ENCODE measurements at regions of chr3 and their contacts with region 1.

Region 1: DNA sequence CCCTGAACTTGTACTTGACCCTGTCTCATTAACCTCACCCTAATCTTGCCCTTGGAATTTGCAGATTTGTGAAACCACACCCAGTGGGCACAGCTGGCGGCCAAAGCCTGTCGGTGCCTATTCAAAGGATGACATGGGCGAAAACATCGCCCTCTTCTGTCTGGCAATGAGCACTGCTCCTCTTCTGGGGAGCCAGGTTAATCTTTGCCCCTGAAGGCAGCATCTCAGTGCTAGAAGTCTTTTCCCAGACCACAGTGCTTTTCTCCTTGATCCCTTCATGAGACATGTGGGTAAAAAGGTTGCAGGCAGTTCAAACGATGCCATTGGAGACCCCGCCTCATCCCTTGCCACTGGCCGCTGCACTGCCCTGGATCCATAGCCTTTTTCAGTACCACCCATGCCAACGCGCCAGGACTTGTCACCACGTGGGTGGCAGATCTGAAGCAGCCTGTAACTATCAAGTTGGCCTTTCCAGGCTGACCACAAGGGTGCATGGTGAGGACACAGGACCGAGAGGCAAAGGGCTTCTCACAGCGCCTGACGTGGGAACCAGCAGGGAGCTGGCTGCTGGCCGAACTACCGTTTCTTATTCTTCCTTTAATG is 6.5 kb upstream of the DNASE1L3 start:
- DNase-seq: peak; percentile 74
- ATAC-seq: peak; percentile 38
- H3K4me3 Mint-ChIP-seq: no peak overlapping the region
- H3K27ac Mint-ChIP-seq: no peak overlapping the region
- H3K4me1 Mint-ChIP-seq: peaks cover 38% of the 10 kb centered on the region
- H3K27me3 Mint-ChIP-seq: peaks cover 2% of the 10 kb centered on the region
- CTCF ChIP-seq: peak; percentile 87

Region 2: GRCh38 chr3:58008140-58009025 is 208.9 kb before region 1 on chr3 and contains the start of gene FLNB:
- CTCF ChIA-PET with region 1: interaction called, 20 read pairs
- POLR2A ChIA-PET with region 1: interaction called, 3 read pairs
- intact Hi-C with region 1: no loop called
- DNase-seq: peak; percentile 78
- ATAC-seq: peak; percentile 88
- H3K4me3 Mint-ChIP-seq: peak within 1 kb of the TSS; percentile 91
- H3K27ac Mint-ChIP-seq: peak within 1 kb of the TSS; percentile 87
- H3K4me1 Mint-ChIP-seq: peaks cover 31% of the 10 kb centered on the region
- H3K27me3 Mint-ChIP-seq: no peaks in the 10 kb centered on the region
- CTCF ChIP-seq: peak; percentile 77
- total RNA-seq, gene FLNB: 26.3 to 28.4 TPM

Region 3: DNA sequence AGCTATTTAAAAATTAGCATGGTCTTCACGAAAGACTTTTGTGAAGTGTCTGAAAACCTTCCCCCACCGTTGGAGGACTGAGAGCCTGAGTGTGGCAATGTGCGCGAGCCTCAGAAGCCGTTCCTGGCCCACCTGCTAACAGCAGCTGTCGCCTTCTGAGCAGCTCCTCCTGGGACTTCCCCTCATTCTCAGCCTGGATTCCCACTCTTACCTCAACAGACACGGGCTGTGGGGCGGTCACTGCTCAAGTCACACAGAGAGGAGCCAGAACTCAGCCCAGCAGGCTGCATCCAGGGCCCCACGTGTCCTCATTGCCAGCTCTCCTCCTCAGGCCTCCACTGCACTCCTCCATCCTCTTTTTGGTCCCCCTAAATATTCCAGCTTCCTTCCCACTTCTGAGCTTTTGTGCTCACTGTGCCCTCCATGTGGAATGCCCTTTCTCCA is 14.4 kb before region 1 on chr3:
- CTCF ChIA-PET with region 1: interaction called, 19 read pairs
- POLR2A ChIA-PET with region 1: interaction called, 4 read pairs
- intact Hi-C with region 1: no loop called
- DNase-seq: no peak
- ATAC-seq: no peak
- H3K4me3 Mint-ChIP-seq: no peak overlapping the region
- H3K27ac Mint-ChIP-seq: no peak overlapping the region
- H3K4me1 Mint-ChIP-seq: peaks cover 16% of the 10 kb centered on the region
- H3K27me3 Mint-ChIP-seq: peaks cover 4% of the 10 kb centered on the region
- CTCF ChIP-seq: no peak

Region 4: DNA sequence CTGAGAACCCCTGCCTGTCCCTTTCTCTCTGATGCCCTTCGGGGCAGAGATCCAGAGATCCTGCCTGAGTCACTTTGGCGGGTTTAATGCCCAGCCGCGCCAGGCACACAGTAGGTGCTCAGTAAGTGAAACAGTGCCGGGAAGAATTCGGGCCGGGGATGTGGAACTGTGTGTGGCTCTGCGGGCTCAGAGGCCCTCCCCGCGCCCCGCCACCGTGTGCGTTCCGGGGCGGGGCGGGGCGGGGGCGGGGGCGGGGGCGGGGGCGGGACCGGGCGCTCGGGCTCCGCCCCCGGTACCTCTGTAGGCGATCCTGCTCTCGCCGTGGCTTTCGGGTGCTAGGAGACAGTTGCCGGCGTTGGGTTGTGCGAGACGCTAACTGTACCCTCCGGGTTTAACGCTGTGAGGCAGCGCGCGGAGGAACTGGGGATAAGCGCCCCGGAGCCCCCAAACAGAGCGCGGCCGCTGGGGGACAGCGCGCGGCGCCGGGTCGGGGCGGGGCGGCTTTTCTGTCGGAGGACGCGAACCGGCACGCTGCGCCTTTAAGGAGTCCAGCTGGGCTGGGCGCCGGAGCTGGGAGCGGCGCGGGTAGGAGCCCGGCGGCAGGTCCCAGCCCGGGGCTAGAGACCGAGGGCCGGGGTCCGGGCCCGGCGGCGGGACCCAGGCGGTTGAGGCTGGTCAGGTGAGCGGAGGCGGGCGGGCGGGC is 20.1 kb after region 1 on chr3 and contains the start of gene ABHD6:
- CTCF ChIA-PET with region 1: interaction called, 89 read pairs
- POLR2A ChIA-PET with region 1: no interaction called
- intact Hi-C with region 1: no loop called
- DNase-seq: peak; percentile 81
- ATAC-seq: peak; percentile 82
- H3K4me3 Mint-ChIP-seq: peak within 1 kb of the TSS; percentile 84
- H3K27ac Mint-ChIP-seq: peak within 1 kb of the TSS; percentile 84
- H3K4me1 Mint-ChIP-seq: peaks cover 5% of the 10 kb centered on the region
- H3K27me3 Mint-ChIP-seq: peaks cover 11% of the 10 kb centered on the region
- CTCF ChIP-seq: no peak
- total RNA-seq, gene ABHD6: 3.3 to 3.7 TPM

Region 5: DNA sequence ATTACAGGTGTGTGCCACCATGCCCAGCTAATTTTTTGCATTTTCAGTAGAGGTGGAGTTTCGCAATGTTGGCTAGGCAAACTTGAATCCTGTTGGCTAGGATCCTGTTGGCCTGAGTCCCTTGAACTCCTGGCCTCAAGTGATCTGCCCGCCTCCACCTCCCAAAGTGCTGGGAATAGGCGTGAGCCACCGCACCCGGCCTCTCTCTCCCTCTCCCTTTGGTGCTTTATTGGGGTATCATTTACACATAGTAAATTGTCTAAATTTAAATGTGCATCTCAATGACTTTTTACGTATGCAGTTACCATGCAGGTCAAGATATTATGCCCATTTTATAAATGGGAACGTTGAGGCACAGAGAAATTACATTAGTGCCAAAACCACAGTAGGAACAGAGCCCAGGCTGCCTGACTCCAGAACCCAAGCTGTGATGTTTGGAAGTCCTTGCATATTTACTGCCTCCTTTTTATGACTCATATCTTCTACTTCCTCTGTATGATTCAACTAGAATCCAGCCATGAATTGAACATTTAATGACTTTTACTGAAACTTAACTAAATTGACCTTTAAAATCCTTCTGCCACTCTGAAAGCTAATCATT is 54.7 kb after region 1 on chr3:
- CTCF ChIA-PET with region 1: no interaction called
- POLR2A ChIA-PET with region 1: no interaction called
- intact Hi-C with region 1: no loop called
- DNase-seq: peak; percentile 17
- ATAC-seq: peak; percentile 92
- H3K4me3 Mint-ChIP-seq: no peak overlapping the region
- H3K27ac Mint-ChIP-seq: peak overlapping the region; percentile 69
- H3K4me1 Mint-ChIP-seq: peaks cover 11% of the 10 kb centered on the region
- H3K27me3 Mint-ChIP-seq: no peaks in the 10 kb centered on the region
- CTCF ChIP-seq: no peak

Region 6: DNA sequence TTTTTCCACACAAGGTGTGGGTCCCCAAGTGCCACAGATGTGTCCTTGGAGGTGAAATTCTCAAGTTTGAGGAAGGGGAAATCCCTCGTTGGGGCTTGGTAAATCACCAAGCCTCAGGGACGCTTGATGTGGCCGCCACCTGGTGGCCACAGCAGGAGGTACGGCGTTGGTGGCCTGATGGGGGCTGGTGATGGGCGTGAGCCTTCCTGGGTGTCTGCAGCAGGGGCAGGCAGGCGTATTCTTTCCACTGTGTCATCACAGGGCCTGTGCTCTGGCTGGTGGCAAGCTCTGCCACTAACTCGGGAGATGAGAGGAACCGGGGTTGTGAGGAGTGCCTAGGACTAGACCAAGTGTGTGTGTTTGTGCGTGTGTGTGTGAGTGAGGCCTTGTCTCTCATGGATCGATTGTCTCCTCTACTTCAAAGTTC is 315.5 kb after region 1 on chr3:
- CTCF ChIA-PET with region 1: no interaction called
- POLR2A ChIA-PET with region 1: no interaction called
- intact Hi-C with region 1: no loop called
- DNase-seq: peak; percentile 90
- ATAC-seq: peak; percentile 98
- H3K4me3 Mint-ChIP-seq: no peak overlapping the region
- H3K27ac Mint-ChIP-seq: peak overlapping the region; percentile 28
- H3K4me1 Mint-ChIP-seq: peaks cover 12% of the 10 kb centered on the region
- H3K27me3 Mint-ChIP-seq: no peaks in the 10 kb centered on the region
- CTCF ChIP-seq: peak; percentile 82

Measured in activated CD8-positive, alpha-beta T cell treated with anti-CD3 and anti-CD28 coated beads for 36 hours (primary cell).